ENCODE measurements at regions of chr5 and their contacts with region 1.

Region 1: DNA sequence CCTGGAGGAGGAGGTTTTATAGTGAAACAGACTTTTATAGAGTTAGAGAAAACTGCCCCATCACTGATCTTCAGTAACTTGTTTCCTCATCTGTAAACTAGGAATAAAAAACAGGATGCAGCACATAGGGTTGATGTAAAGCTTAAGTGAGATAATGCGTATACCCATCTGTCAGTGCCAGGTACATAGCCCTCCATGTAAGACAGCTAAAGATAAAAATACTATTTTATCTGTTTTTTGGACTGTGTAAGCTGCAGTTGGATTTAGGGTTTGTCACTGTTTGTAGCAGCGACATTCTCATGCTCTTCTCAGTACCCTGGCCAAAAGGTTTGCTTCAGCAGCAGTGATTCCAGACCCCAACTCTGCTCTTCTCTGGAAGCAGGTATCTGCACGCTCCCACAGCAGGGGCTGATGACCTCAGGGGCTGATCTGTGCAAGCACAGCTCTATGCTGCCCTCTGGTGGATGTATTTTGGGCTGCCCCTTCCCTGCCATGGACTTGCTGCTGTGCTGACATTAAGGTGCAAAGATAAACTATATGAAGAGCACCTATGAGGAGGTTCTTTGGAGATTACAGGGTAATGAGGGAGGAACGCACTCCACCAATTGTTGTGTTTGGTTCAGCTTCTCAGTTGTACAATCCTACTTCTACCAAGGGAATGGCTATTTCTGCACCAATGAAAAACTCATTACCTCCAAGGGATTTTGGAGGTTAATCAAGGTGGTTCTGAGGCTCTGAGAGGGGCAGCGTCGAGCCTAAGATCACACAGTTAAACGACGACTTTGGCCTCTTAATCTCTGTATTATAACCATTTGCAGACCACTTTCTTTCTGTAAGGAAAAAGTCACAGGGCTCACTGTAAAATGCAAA is 13.1 kb downstream of the HMHB1 start:
- DNase-seq: peak; percentile 88

Region 2: GRCh38 chr5:143002459-143003328 is 822.4 kb before region 1 on chr5:
- in situ Hi-C with region 1: loop called (anchors 25 kb)
- DNase-seq: peak; percentile 99

Region 3: GRCh38 chr5:143923634-143924255 is 98.7 kb after region 1 on chr5:
- in situ Hi-C with region 1: no loop called
- DNase-seq: no peak

Measured in KBM-7 (cell line).